GM10248 (cell line): ENCODE measurements at regions of chr2 and their contacts with region 1.

Region 1: DNA sequence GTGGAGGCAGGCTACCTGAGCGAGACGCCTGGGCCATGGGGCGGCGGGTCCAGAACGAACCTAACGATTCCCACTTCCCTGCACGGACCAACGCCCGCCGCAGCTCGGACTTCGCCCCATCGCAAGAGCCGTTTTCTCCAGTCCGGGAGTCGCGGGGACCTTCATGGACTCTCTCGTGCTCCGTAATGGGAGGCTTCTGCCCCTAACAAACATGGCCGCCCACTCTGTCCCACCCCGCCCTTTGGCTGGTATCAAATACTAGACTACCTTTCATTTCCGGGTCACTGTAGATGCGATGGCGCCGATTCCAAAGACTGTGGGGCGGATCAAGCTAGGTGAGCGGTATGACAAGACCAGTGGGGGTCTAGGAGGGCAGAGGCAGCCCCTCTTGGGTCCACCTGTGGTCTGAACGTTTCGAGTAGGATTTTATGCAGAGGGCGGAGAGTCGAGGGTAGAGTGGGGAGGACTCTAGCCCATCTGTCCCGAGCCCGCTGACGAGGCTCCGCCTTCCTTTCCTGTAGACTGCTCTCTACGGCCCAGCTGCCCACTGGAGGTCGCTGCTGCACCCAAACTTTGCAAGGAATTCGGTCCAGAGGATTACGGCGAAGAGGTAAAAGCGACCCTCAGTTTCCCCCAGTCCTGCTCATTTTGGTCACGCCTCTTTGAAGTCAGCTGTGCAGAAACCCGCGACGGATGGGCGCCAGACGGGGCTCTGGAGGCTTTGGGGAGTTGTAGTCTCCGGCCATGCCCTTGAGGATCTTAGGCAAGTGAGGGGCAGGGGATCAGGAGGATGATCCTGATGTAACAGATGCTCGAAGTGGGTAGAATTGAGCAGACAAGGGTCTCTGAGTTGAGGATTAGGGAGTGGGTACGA is at the starts of genes CCDC142 and TTC31:
- DNase-seq: peak; percentile 93
- CTCF ChIP-seq: peak; percentile 88

Region 2: DNA sequence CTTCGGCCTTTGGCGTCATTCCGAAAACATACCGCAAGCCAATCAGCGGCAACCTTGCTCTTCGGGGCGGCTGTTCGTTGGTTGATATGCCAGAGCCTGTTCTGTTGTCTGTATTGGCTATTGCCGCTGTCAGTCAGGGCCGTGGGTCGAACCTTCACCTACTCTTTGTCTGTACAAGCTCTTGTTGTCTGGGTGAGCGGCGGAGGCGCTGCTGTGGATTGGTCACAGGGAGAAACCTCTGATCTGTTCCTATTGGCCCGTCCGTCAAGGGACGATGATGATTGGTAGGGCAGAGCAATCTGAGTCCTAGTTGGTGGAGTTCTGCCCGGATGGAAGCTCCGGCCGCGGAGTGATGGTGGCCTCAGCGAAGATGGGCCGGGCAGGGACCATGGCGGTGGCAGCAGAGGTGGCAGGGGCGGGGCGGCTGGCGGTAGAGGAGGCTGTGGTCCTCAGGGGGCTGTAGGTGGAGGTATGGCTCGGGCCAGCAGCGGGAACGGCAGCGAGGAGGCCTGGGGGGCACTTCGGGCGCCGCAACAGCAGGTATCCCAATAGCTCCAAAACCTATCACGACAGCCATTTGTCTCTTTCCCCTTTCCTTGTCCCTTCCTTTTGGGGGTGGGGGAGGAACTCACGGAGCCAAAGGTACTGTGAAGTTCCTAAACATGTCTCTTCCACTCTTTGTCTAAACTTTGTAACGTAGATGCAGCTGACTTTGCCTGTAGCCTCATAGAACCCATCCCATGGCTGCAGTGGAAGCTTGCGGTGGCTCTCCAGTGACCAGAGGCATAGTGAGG is 24.7 kb before region 1 on chr2 and contains the start of gene WBP1:
- CTCF ChIA-PET with region 1: interaction called, 29 read pairs
- POLR2A ChIA-PET with region 1: interaction called, 3 read pairs
- DNase-seq: peak; percentile 95
- CTCF ChIP-seq: no peak

Region 3: GRCh38 chr2:74472086-74472944 is 10.7 kb before region 1 on chr2 and contains the start of gene MRPL53:
- CTCF ChIA-PET with region 1: interaction called, 24 read pairs
- POLR2A ChIA-PET with region 1: interaction called, 4 read pairs
- DNase-seq: peak; percentile 88
- CTCF ChIP-seq: no peak

Region 4: DNA sequence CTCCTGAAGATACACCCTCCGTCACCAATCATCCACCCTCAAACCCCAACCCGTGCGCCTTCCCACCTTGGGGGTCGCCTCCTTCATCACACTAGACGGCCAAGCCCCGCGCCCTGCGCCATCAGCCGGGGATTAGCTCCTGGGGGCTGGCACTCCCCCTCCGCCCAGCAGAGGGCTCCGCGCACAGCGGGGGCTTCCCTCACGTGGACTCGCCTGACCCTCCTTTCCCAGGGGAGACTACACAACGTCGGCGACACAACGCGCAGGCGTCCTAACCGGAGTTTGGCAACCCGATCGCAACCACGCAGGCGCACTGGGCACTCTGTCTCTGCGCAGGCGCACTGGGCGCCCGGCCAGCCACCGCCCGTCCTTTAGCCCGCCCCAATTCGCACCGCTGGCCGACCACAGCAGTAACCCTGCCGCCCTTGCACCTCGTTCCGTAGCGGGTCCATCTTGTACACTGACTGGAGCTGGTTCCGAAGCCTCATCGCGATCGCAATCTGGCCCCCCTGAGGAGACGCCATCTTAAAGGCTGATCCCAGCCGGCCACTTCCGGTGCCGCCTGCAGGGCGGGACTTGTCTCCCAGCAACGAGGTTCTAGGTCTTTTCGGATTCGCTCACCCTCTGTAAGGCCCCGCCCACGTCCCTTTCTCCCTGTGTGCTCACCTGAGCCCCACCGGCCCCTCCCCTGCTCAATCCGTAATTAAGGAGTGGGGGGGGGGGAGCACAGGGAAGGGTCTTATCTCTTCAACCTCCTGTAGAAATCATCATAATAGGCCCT is 24.3 kb after region 1 on chr2 and contains the start of gene PCGF1:
- CTCF ChIA-PET with region 1: interaction called, 11 read pairs
- POLR2A ChIA-PET with region 1: no interaction called
- DNase-seq: peak; percentile 97
- CTCF ChIP-seq: peak; percentile 61

Region 5: DNA sequence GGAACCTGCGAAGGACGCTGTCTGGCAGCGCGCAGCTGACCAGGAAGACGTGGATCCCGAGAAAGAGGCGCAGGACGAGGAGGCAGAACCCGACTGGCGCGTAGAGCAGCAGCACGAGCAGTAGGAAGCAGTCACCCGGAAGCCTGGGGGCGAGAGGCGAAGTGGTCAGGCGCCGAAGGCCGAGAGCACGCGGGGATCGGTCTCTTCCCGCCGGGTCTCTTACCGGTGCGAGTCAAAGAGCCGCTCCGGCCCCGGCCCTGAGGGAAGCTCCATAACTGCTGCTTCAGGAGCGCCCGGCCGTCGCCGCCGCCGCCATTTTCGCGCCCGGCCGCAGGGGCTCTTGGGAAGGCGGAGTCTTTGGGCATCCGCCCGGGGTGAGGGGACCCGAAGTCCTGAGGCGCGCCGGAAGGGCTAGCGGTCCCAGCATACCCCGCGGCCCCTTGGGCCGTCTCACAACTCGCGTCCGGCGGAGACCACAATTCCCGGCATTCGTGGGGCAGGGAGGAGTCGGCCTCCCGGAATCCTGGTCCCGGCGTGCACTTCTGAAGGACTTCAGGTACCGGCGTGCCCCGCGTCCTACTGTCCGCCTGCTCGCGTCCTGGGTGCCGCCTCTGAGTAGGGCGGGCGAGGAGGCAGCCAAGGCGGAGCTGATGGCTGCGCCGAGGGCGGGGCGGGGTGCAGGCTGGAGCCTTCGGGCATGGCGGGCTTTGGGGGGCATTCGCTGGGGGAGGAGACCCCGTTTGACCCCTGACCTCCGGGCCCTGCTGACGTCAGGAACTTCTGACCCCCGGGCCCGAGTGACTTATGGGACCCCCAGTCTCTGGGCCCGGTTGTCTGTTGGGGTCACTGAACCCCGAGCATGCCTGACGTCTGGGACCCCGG is 46.6 kb after region 1 on chr2 and contains the starts of genes AUP1 and HTRA2:
- CTCF ChIA-PET with region 1: interaction called, 35 read pairs
- POLR2A ChIA-PET with region 1: no interaction called
- DNase-seq: peak; percentile 98
- CTCF ChIP-seq: no peak

Region 6: DNA sequence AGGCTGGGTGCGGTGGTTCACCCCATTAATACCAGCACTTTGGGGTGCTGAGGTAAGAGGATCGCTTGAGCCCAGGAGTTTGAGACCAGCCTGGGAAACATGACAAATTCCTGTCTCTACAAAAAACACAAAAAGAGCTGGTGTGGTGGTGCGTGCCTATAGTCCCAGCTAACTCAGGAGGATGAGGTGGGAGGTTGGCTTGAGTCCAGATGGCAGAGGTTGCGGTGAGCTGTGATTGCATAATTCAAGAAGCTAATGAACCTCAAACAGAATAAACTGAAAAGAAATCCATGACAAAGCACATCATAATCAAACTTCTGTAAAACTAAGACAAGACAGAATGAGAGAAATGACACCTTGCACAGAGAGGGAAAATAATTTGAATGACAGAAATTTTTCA is 225.8 kb after region 1 on chr2:
- CTCF ChIA-PET with region 1: no interaction called
- POLR2A ChIA-PET with region 1: no interaction called
- DNase-seq: no peak
- CTCF ChIP-seq: no peak